Activated CD8-positive, alpha-beta T cell treated with anti-CD3 and anti-CD28 coated beads, Interleukin-2, amount 10 ng/mL, durations not matched to agents 7 days and 5 days (primary cell): ENCODE measurements at regions of chr17 and their contacts with region 1.

Region 1: DNA sequence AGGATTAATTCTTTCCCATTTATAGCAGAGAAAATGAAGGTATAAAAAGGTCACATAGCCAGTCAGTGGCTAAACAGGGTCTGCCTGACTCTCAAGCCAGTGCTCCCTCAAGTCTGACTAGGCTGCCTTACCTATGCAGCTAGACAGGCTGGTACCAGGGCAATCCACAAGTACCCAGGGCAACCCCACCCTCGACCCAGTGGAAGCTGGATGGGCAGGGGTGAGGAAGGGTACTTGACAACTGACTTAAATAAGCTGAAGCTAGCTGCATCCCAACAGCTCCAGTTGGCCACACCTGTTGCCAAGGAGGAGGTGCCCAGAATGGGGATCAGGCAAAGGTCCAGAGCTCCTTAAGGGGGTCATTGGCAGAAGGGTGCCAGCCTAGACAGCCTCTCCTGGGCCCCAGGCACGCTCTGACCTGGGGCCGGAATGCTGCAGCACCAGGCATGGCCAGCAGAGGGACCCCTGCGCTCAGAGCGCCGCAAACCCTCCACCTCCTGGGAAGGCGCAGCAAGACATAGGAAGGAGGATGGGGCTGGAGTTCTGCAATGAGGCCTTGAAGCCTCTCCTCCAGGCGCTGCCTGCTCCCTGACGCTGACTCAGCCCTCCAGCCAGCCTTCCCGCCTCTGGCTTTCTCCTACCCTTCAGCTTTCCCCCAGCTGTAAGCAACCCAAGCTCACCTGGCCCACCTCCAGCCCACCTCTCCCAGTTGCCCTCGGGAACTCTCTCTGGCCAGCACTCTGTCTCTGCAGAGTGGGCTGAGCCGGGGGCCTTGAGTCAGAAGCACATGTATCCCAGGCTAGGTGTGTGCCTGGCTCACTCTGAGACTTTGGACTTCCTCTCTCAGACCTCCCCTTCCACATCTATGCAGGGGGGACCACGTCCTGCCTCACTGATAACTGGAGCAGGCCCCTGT is 28.8 kb downstream of the MPP2 start:
- DNase-seq: peak; percentile 70
- ATAC-seq: peak; percentile 83
- H3K4me3 Mint-ChIP-seq: no peak overlapping the region
- H3K27ac Mint-ChIP-seq: no peak overlapping the region
- H3K4me1 Mint-ChIP-seq: peaks cover 2% of the 10 kb centered on the region
- H3K27me3 Mint-ChIP-seq: peaks cover 2% of the 10 kb centered on the region

Region 2: GRCh38 chr17:43868226-43868994 is 10.1 kb before region 1 on chr17:
- CTCF ChIA-PET with region 1: interaction called, 15 read pairs
- POLR2A ChIA-PET with region 1: no interaction called
- DNase-seq: no peak
- ATAC-seq: no peak
- H3K4me3 Mint-ChIP-seq: no peak overlapping the region
- H3K27ac Mint-ChIP-seq: no peak overlapping the region
- H3K4me1 Mint-ChIP-seq: no peaks in the 10 kb centered on the region
- H3K27me3 Mint-ChIP-seq: peaks cover 33% of the 10 kb centered on the region

Region 3: GRCh38 chr17:43891851-43892646 is 13.5 kb after region 1 on chr17:
- CTCF ChIA-PET with region 1: interaction called, 38 read pairs
- POLR2A ChIA-PET with region 1: no interaction called
- DNase-seq: no peak
- ATAC-seq: no peak
- H3K4me3 Mint-ChIP-seq: no peak overlapping the region
- H3K27ac Mint-ChIP-seq: no peak overlapping the region
- H3K4me1 Mint-ChIP-seq: no peaks in the 10 kb centered on the region
- H3K27me3 Mint-ChIP-seq: peaks cover 4% of the 10 kb centered on the region

Region 4: GRCh38 chr17:43900183-43900857 is 21.8 kb after region 1 on chr17:
- CTCF ChIA-PET with region 1: interaction called, 38 read pairs
- POLR2A ChIA-PET with region 1: no interaction called
- DNase-seq: peak; percentile 87
- ATAC-seq: peak; percentile 100
- H3K4me3 Mint-ChIP-seq: peak overlapping the region; percentile 68
- H3K27ac Mint-ChIP-seq: no peak overlapping the region
- H3K4me1 Mint-ChIP-seq: peaks cover 8% of the 10 kb centered on the region
- H3K27me3 Mint-ChIP-seq: peaks cover 19% of the 10 kb centered on the region

Region 5: DNA sequence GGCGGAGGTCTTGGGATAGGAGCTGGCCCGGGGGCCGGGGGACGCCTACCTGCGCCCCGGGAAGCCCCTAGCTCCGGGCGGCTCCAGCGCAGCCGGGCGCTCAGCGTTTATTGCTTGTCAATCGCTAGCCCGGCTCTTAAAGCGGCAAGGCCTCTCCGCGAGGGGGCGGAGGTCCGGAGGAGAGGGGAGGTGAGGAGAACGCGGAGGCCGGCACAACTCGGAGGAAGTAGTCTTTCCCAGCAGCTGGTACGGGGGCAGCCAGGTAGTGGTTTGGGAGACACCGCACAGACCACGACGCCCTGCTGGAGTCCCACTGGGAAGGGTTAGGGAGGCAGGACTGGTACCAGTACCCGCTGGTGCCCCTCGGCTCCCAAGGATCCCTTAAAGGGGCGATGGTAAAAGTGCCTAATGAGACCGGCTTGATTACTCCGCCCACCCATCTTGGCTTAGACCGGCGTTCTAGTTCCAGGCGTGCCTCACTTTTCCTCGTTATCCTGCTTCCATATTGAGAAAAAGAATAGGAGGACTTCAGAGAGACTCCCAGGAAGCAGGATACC is 29.0 kb after region 1 on chr17 and contains the start of gene MPP2:
- CTCF ChIA-PET with region 1: interaction called, 17 read pairs
- POLR2A ChIA-PET with region 1: no interaction called
- DNase-seq: peak; percentile 50
- ATAC-seq: peak; percentile 50
- H3K4me3 Mint-ChIP-seq: peak within 1 kb of the TSS; percentile 27
- H3K27ac Mint-ChIP-seq: no peak within 1 kb of the TSS
- H3K4me1 Mint-ChIP-seq: peaks cover 13% of the 10 kb centered on the region
- H3K27me3 Mint-ChIP-seq: peaks cover 46% of the 10 kb centered on the region
- total RNA-seq, gene MPP2: 1.2 to 1.8 TPM

Region 6: DNA sequence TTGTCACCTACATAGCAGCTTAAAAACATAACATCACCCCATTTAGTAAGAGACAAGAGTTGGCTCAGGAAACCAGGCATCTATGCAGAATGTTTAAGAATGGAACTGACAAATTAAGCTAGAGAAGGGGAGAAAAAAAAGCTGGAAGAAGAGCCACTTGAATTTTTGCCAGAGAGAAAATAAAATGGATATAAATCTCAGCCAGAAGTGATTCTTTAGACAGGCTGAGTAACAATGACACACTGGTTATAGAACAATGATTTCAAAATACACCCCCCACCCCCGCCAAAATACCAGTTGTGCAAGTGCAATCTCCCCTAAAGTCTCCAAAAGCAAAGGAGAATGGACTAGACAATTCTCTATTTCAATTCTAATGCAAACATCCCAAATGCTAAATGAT is 165.5 kb after region 1 on chr17:
- CTCF ChIA-PET with region 1: interaction called, 18 read pairs
- POLR2A ChIA-PET with region 1: no interaction called
- DNase-seq: no peak
- ATAC-seq: no peak
- H3K4me3 Mint-ChIP-seq: no peak overlapping the region
- H3K27ac Mint-ChIP-seq: no peak overlapping the region
- H3K4me1 Mint-ChIP-seq: peaks cover 17% of the 10 kb centered on the region
- H3K27me3 Mint-ChIP-seq: no peaks in the 10 kb centered on the region